Activated CD4-positive, alpha-beta T cell treated with anti-CD3 and anti-CD28 coated beads, Interleukin-2, amount 10 ng/mL, durations not matched to agents 24 days and 14 days (primary cell): ENCODE measurements at regions of chr2 and their contacts with region 1.

Region 1: DNA sequence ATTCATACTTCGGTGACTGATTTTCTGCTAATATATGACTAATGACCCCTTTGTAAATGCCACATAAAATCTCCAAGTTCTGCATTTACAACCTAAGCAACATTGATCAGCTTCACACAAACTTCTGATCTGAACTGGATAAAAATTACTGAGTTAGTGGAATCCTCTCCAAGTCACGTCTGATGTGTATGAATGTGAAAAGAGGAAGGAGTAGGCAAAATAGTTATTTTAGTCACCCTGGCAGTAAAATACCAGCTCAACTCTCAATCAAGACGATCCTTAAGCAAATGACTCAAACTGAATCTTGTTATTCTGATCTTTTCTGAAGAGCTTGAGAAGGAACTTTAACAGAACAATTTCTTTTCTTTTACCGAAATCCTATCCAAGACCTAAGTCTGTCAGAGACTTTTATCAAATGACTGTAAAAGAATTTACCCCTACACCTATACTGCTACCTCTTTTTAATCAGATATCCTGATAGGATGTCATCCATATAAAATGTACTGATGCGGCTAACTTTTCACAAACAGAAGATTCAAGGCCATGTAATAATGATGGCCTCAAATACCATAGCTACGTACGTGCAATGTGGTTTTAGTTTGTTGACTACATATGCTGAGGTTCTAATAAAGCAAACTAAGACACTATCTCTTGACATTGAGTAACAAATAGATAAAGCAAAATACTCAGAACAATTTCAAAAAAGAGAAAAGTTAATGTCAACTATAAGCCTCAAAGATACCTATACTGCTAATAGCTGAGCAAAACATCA is 23.7 kb downstream of the CUL3 start:
- DNase-seq: no peak
- H3K4me3 Mint-ChIP-seq: no peak overlapping the region
- H3K27ac Mint-ChIP-seq: no peak overlapping the region
- H3K4me1 Mint-ChIP-seq: peaks cover 17% of the 10 kb centered on the region
- H3K27me3 Mint-ChIP-seq: no peaks in the 10 kb centered on the region

Region 2: DNA sequence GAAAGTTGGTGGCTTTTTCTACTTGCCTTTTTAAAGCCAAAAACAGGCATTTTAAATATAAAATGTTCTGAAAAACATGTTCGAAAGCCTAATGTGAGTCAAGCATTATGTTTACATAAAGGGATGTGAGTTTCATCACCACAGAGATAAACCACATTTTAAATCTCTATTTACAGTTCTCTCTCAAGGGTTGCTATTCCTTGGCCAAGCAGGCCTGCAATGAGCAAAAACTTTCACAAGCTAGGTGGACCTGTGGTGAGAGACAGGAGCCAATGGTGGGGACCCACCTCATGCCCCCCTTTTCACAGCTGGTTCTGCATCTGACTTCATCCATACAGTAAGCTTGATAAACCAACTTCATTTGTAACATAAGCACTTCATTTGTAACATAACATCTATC is 41.4 kb before region 1 on chr2:
- intact Hi-C with region 1: loop called (anchors 5 kb)
- DNase-seq: peak; percentile 74
- H3K4me3 Mint-ChIP-seq: no peak overlapping the region
- H3K27ac Mint-ChIP-seq: peak overlapping the region; percentile 50
- H3K4me1 Mint-ChIP-seq: peaks cover 45% of the 10 kb centered on the region
- H3K27me3 Mint-ChIP-seq: no peaks in the 10 kb centered on the region

Region 3: GRCh38 chr2:224574423-224575084 is 13.1 kb after region 1 on chr2:
- intact Hi-C with region 1: loop called (anchors 2 kb)
- DNase-seq: no peak
- H3K4me3 Mint-ChIP-seq: peak overlapping the region; percentile 48
- H3K27ac Mint-ChIP-seq: no peak overlapping the region
- H3K4me1 Mint-ChIP-seq: peaks cover 55% of the 10 kb centered on the region
- H3K27me3 Mint-ChIP-seq: no peaks in the 10 kb centered on the region